Common myeloid progenitor, CD34-positive (primary cell): ENCODE measurements at regions of chr7 and their contacts with region 1.

Region 1: DNA sequence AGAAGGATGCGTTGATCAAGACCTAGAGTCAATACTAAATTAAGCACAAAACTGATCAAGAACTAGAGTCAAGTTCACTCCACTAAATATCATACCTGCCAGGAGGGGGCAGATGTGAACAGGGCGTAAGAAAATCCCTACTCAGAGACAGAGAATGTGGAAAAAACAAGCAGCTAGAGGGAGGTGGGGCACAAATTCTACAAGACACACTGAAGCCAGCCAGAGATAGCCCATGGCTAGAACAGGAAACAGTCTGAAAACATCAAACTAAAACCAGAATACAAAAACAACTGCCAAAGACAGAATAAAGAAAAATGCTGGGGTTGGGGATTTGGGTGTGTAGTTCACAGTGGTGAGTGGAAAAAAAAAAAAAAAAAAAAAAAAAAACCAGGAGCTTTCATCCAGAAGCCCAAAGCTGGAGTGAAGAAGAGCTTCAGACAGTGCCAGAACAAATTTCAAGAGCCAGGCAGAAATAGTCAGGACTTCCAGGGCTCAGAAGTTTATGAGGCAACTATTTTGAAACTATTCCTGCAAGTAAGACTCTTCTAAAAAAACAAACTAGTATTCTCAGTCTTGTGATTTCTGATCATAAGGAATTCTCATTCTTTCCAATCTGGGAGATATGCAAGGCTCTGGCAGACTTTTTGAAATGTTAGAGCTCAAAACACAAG is 118.3 kb downstream of the CCDC71L start:
- DNase-seq: peak; percentile 81 to 90 (median 88)
- H3K4me3 ChIP-seq: no peak overlapping the region
- H3K27ac ChIP-seq: no peak overlapping the region
- H3K4me1 ChIP-seq: peaks cover 0 to 8% (median 0%) of the 10 kb centered on the region in 4 experiments
- H3K27me3 ChIP-seq: no peaks in the 10 kb centered on the region

Region 2: DNA sequence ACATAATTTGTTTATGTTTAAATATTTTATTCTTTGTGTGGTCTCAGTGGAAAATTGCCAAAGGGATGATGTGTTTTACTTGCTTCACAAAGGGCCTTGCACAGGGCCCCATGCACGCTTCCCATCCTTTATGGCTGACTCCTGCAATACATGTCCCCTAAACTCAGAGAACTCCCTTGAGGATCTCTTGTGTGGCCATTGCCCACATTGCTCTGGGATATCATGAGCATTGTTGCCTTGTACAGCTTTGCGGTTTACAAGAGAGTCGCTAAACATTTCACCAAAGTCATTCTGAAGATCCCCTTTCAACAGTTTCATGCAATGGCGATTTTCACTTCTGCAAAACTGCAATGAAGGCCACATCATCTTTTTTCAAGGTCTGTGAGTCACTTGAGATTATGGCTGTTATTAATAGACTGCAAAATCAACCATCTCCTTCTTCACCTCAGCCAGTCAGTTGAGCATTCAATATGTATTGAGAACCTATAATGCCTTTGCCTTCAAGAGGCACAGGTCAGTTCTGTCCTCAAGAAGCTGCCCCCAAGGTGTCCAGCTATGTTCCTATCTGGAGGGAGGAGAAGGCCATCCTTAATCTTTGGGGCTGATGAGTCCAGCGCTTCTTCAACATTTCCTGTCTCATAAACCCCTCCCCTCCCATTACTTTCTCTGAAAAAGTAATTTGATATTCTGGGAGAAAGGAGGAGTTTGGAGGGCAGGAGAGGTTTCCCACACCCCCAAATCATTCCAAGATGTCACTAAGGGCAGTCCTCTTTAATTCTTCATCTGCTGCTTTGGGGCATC is 10.2 kb after region 1 on chr7:
- CTCF ChIA-PET with region 1: interaction called, 19 read pairs
- POLR2A ChIA-PET with region 1: no interaction called
- DNase-seq: peak in 2 of 3 donors; percentile 33 to 39
- H3K4me3 ChIP-seq: no peak overlapping the region
- H3K27ac ChIP-seq: no peak overlapping the region
- H3K4me1 ChIP-seq: no peaks in the 10 kb centered on the region
- H3K27me3 ChIP-seq: no peaks in the 10 kb centered on the region